IMR-90 (cell line): ENCODE measurements at regions of chr6 and their contacts with region 1.

Region 1: DNA sequence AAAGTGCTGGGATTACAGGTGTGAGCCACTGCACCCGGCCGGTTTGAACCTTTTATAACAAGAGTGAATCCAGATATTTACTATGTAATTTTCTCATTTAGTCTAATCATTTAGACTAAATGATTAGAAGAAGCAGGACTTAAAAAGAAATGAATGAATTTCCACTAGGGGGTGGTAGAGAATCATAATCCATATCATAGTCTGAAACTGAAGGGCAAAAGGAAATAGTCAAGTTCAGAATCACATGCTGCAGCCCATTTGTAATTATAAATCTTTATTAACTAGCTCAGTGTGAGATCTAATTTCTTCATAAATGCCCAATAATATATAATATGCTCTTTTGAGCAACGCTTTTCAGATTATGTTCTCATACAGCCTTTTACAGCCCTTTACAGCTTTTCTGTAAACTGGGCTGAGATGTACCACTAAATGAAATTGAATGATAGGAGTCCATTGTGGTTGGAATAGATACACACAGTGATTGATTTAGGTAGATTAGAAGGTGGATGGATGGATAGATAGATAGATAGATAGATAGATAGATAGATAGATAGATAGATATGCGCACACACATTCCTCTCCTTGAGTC is 31.8 kb downstream of the PSMB9 start:
- DNase-seq: peak; percentile 81
- ATAC-seq: peak; percentile 44; the same call in 1 of the 2 replicates
- H3K4me3 ChIP-seq: no peak overlapping the region
- H3K27ac ChIP-seq: no peak overlapping the region
- H3K4me1 ChIP-seq: peaks cover 15% of the 10 kb centered on the region
- H3K27me3 ChIP-seq: no peaks in the 10 kb centered on the region
- CTCF ChIP-seq: peak; percentile 76
- POLR2A ChIP-seq: no peak
- RAD21 ChIP-seq: peak; percentile 77

Region 2: DNA sequence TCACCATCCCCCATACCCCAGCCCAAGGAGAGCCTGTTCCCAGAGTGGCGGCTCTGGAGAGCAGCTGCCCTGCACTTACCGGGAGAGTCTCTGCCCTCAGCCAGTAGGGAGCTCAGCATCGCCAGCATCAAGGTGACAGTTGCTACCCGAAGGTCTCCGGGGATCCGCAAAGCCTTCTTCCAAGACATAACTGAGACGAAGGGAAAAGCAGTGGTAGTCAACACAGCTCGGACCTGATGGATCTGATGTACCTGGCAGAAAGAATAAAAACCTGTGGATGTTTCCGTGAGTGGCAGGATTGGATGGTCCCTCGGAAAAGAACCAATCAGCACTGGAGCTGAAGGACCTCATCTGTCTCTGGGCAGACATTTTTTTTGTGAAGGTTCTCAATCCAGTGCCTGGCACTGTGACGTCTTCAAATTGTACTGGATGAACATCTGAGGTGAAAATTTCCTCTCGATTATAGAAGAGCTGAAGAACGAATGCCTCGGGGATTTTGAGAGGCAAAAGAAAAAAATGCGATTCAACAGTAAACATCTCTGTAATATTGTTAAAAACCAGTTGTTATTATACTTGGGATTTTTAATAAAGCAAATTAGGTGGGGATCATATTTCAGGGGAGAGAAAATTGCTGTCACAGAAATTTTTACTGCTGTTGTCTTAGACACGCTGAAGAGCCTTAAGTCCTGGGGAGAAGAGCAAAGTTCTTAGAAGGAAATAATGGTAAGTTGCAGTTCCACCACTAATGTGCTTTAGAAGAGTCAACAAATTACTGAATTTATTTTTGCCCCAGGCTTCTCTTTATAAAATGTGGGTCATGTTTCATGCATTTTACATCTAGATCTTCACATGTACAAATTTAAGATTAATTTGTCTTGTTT is 219.1 kb before region 1 on chr6 and contains the start of gene HLA-DQB1:
- CTCF ChIA-PET with region 1: no interaction called
- POLR2A ChIA-PET with region 1: no interaction called
- dilution Hi-C with region 1: no loop called
- in situ Hi-C with region 1: no loop called
- intact Hi-C with region 1: no loop called
- DNase-seq: no peak
- ATAC-seq: no peak
- H3K4me3 ChIP-seq: no peak within 1 kb of the TSS
- H3K27ac ChIP-seq: no peak within 1 kb of the TSS
- H3K4me1 ChIP-seq: no peaks in the 10 kb centered on the region
- H3K27me3 ChIP-seq: no peaks in the 10 kb centered on the region
- CTCF ChIP-seq: no peak
- POLR2A ChIP-seq: no peak
- RAD21 ChIP-seq: no peak
- total RNA-seq, gene HLA-DQB1: not detected in 2 replicates

Region 3: DNA sequence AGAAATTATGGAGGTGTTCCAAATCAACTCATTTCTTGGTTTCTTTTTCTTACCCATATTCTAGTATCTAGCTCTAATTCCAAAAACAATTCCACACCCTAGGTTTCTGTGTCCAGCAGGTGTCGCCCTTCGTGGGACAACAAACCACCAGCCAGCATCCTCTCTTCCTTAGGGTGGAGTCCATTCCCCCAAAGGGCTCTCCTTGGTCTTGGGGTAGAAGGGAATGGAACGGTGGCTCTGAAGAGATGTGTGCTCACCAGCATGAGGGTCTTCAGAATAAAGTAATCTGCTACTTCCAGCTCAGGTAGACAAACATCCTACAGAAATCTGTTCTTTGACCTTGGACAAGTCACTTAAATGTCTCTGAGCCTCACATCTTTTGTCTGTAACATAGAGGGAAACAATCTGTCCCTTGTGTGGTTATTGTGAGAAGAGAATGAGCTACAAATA is 47.9 kb after region 1 on chr6:
- CTCF ChIA-PET with region 1: no interaction called
- POLR2A ChIA-PET with region 1: no interaction called
- dilution Hi-C with region 1: no loop called
- in situ Hi-C with region 1: no loop called
- intact Hi-C with region 1: loop called (anchors 1 kb)
- DNase-seq: peak; percentile 73
- ATAC-seq: peak; percentile 91
- H3K4me3 ChIP-seq: no peak overlapping the region
- H3K27ac ChIP-seq: no peak overlapping the region
- H3K4me1 ChIP-seq: no peaks in the 10 kb centered on the region
- H3K27me3 ChIP-seq: peaks cover 17% of the 10 kb centered on the region
- CTCF ChIP-seq: peak; percentile 85
- POLR2A ChIP-seq: no peak
- RAD21 ChIP-seq: peak; percentile 80

Region 4: GRCh38 chr6:32947552-32948465 is 62.0 kb after region 1 on chr6:
- CTCF ChIA-PET with region 1: interaction called, 9 read pairs
- POLR2A ChIA-PET with region 1: no interaction called
- dilution Hi-C with region 1: no loop called
- in situ Hi-C with region 1: no loop called
- intact Hi-C with region 1: loop called (anchors 1 kb)
- DNase-seq: peak; percentile 64
- ATAC-seq: peak; percentile 52
- H3K4me3 ChIP-seq: no peak overlapping the region
- H3K27ac ChIP-seq: no peak overlapping the region
- H3K4me1 ChIP-seq: peaks cover 11% of the 10 kb centered on the region
- H3K27me3 ChIP-seq: no peaks in the 10 kb centered on the region
- CTCF ChIP-seq: peak; percentile 63
- POLR2A ChIP-seq: no peak
- RAD21 ChIP-seq: peak; percentile 80

Region 5: GRCh38 chr6:32952817-32953739 is 67.3 kb after region 1 on chr6 and contains the start of gene HLA-DMA:
- CTCF ChIA-PET with region 1: interaction called, 9 read pairs
- POLR2A ChIA-PET with region 1: no interaction called
- dilution Hi-C with region 1: no loop called
- in situ Hi-C with region 1: no loop called
- intact Hi-C with region 1: loop called (anchors 1 kb)
- DNase-seq: peak; percentile 96
- ATAC-seq: peak; percentile 99
- H3K4me3 ChIP-seq: no peak within 1 kb of the TSS
- H3K27ac ChIP-seq: peak within 1 kb of the TSS; percentile 8; the same call in 1 of the 2 replicates
- H3K4me1 ChIP-seq: peaks cover 3% of the 10 kb centered on the region; the same call in 1 of the 2 replicates
- H3K27me3 ChIP-seq: no peaks in the 10 kb centered on the region
- CTCF ChIP-seq: peak; percentile 75
- POLR2A ChIP-seq: no peak
- RAD21 ChIP-seq: peak; percentile 67
- total RNA-seq, gene HLA-DMA: 1.7 and 2.3 TPM in 2 replicates

Region 6: DNA sequence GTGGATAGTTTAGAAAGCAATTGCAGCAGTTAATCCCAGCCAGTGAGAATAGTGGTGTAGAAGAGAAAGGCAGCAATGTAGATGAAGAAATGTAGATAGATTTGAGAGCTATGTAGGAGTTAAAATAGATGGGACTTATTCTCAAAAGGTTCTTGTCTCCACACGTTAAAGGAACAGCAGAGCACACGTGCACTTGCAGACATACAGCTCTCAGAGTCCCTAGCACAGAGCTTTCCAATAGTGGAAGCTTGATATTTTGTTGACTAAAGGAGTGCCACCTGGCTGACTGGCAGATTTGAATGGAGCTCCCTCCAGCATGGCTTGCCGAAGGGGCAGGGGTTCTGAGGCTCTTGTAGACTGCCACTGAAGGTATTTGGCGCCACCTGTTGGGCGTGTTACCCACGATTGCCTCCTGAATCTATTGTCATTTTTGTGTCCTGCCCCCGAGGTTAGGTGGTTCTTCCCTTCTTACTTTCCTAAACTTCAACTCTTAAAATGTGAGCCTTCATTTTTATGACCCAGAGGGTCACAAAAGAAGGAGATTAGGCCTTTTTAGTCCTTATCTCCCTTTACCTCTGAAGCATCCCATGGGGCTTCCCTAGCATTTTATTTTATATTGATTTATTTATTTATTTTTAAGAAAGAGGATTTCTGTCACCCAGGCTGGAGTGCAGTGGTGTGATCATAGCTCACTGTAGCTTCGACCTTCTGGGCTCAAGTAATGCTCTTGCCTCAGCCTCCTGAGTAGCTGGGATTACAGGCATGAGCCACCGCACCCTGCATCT is 99.0 kb after region 1 on chr6:
- CTCF ChIA-PET with region 1: interaction called, 19 read pairs
- POLR2A ChIA-PET with region 1: interaction called, 4 read pairs
- dilution Hi-C with region 1: no loop called
- in situ Hi-C with region 1: no loop called
- intact Hi-C with region 1: loop called (anchors 1 kb)
- DNase-seq: peak; percentile 79
- ATAC-seq: peak; percentile 75
- H3K4me3 ChIP-seq: no peak overlapping the region
- H3K27ac ChIP-seq: no peak overlapping the region
- H3K4me1 ChIP-seq: no peaks in the 10 kb centered on the region
- H3K27me3 ChIP-seq: peaks cover 11% of the 10 kb centered on the region
- CTCF ChIP-seq: peak; percentile 93
- POLR2A ChIP-seq: no peak
- RAD21 ChIP-seq: peak; percentile 97

Region 7: GRCh38 chr6:33082702-33083101 is 196.9 kb after region 1 on chr6:
- CTCF ChIA-PET with region 1: no interaction called
- POLR2A ChIA-PET with region 1: no interaction called
- dilution Hi-C with region 1: no loop called
- in situ Hi-C with region 1: no loop called
- intact Hi-C with region 1: loop called (anchors 5 kb)
- DNase-seq: peak; percentile 13
- ATAC-seq: peak; percentile 46
- H3K4me3 ChIP-seq: no peak overlapping the region
- H3K27ac ChIP-seq: no peak overlapping the region
- H3K4me1 ChIP-seq: no peaks in the 10 kb centered on the region; the same call in 1 of the 2 replicates
- H3K27me3 ChIP-seq: peaks cover 17% of the 10 kb centered on the region
- CTCF ChIP-seq: peak; percentile 51
- POLR2A ChIP-seq: no peak
- RAD21 ChIP-seq: peak; percentile 34

Region 8: DNA sequence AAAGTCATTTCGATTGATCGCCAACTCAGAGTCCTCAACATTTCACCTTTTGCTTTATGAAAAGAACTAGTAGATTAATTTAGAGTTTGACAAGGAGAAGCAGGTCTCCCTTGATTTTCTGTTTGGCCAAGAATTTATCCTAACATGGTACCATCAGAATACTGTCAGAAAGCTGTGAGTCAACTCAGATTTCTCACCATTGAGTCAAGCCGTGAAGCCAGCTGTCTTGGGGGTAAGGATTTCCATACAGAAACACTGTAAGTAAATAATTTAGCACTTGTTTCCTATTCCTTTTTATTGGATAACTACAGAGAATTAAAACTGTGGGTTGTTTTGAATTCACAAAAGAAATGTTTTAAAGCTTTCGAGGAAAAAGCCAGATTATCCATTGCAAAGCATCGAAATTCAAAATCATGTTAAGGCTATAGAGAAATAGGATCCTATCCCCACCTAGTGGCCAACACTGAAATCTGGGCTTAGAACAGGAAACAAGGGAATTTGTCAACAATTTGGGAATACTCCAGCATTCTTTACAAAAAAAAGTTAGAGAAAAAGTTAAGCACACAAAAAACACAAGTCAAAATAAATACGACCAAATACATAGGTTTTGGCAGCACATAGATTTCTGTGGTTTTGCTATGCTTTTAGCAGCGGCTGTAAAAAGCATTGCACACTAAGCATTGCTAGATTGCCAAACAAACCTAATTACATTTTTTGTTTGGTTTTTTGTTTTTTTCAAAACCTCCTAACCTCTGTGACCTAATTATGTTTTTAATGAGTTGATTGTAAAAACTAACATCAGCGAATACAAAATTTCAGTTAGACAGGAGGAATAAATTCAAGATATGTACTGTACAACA is 262.2 kb after region 1 on chr6:
- CTCF ChIA-PET with region 1: no interaction called
- POLR2A ChIA-PET with region 1: no interaction called
- dilution Hi-C with region 1: no loop called
- in situ Hi-C with region 1: no loop called
- intact Hi-C with region 1: loop called (anchors 1 kb)
- DNase-seq: peak; percentile 58
- ATAC-seq: peak; percentile 90
- H3K4me3 ChIP-seq: no peak overlapping the region
- H3K27ac ChIP-seq: no peak overlapping the region
- H3K4me1 ChIP-seq: no peaks in the 10 kb centered on the region
- H3K27me3 ChIP-seq: peaks cover 16% of the 10 kb centered on the region
- CTCF ChIP-seq: peak; percentile 79
- POLR2A ChIP-seq: no peak
- RAD21 ChIP-seq: peak; percentile 65